Activated CD4-positive, alpha-beta memory T cell treated with anti-CD3 and anti-CD28 coated beads for 36 hours (primary cell): ENCODE measurements at regions of chr3 and their contacts with region 1.

Region 1: DNA sequence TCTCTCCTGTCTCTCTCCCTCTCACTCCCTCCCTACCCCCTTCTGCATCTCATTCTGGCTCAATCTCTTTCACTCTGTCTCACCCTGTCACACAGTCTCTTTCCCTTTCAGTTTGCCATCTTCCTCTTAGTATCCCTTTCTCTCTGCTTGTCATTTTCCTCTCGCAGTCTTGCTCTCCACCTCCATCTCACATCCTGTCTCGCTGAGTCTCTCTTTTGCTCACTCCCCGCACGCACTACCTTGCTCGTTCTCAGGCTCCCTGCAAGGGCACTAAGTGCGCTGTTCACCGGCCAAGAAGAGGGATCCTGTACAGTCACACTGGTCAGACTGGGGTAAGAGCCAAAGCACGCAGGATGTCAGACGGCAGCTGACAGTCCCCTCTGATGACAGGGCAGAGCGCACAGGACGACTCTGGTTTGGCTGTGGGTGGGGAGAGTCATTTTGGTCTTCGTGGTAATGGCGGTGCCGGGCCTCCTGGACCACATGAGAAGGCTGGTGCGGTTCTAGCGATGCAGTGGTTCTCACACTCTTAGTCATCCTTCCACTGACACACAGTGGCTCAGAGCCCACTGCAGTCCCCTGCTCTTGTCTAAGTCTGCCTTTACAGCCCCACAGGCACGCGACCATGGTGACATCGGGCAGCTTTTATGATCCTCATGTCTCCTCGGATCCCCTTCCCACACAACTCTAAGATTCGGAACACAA is 356.8 kb downstream of the FOXP1 start:
- DNase-seq: peak; percentile 96
- H3K4me3 Mint-ChIP-seq: peak overlapping the region; percentile 77
- H3K27ac Mint-ChIP-seq: peak overlapping the region; percentile 96
- H3K4me1 Mint-ChIP-seq: peaks cover 77% of the 10 kb centered on the region
- H3K27me3 Mint-ChIP-seq: no peaks in the 10 kb centered on the region

Region 2: DNA sequence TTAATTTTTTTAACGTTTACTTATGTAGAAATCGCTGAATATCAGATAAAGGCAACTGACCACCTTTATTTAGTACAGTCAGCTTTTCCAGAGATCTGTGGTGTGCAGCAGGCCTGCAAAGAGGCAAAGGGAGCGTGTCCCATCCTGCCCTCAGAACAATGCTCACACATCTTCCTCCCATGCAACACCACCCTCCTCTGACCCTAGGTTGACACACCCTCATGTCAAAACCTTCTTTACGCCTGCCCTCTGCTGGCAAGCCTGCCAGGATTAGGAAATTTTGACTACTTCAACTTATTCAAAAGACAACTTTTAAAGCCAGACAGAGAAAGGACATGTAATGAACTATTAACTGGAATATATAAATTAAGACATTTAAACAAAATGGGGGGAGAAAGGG is 156.9 kb before region 1 on chr3:
- CTCF ChIA-PET with region 1: no interaction called
- POLR2A ChIA-PET with region 1: interaction called, 4 read pairs
- intact Hi-C with region 1: loop called (anchors 1 kb)
- DNase-seq: peak; percentile 84
- H3K4me3 Mint-ChIP-seq: no peak overlapping the region
- H3K27ac Mint-ChIP-seq: peak overlapping the region; percentile 62
- H3K4me1 Mint-ChIP-seq: peaks cover 74% of the 10 kb centered on the region
- H3K27me3 Mint-ChIP-seq: no peaks in the 10 kb centered on the region

Region 3: GRCh38 chr3:71130471-71131374 is 96.0 kb before region 1 on chr3:
- CTCF ChIA-PET with region 1: no interaction called
- POLR2A ChIA-PET with region 1: interaction called, 7 read pairs
- intact Hi-C with region 1: loop called (anchors 1 kb)
- DNase-seq: peak; percentile 81
- H3K4me3 Mint-ChIP-seq: peak overlapping the region; percentile 93
- H3K27ac Mint-ChIP-seq: peak overlapping the region; percentile 94
- H3K4me1 Mint-ChIP-seq: peaks cover 68% of the 10 kb centered on the region
- H3K27me3 Mint-ChIP-seq: no peaks in the 10 kb centered on the region

Region 4: GRCh38 chr3:71262364-71263265 is 35.9 kb after region 1 on chr3:
- CTCF ChIA-PET with region 1: no interaction called
- POLR2A ChIA-PET with region 1: interaction called, 3 read pairs
- intact Hi-C with region 1: loop called (anchors 2 kb)
- DNase-seq: no peak
- H3K4me3 Mint-ChIP-seq: no peak overlapping the region
- H3K27ac Mint-ChIP-seq: peak overlapping the region; percentile 43
- H3K4me1 Mint-ChIP-seq: peaks cover 62% of the 10 kb centered on the region
- H3K27me3 Mint-ChIP-seq: no peaks in the 10 kb centered on the region

Region 5: GRCh38 chr3:71423151-71423906 is 196.6 kb after region 1 on chr3:
- CTCF ChIA-PET with region 1: no interaction called
- POLR2A ChIA-PET with region 1: interaction called, 3 read pairs
- intact Hi-C with region 1: loop called (anchors 1 kb)
- DNase-seq: no peak
- H3K4me3 Mint-ChIP-seq: no peak overlapping the region
- H3K27ac Mint-ChIP-seq: peak overlapping the region; percentile 85
- H3K4me1 Mint-ChIP-seq: peaks cover 81% of the 10 kb centered on the region
- H3K27me3 Mint-ChIP-seq: no peaks in the 10 kb centered on the region